Caco-2 (cell line): ENCODE measurements at regions of chr12 and their contacts with region 1.

Region 1: DNA sequence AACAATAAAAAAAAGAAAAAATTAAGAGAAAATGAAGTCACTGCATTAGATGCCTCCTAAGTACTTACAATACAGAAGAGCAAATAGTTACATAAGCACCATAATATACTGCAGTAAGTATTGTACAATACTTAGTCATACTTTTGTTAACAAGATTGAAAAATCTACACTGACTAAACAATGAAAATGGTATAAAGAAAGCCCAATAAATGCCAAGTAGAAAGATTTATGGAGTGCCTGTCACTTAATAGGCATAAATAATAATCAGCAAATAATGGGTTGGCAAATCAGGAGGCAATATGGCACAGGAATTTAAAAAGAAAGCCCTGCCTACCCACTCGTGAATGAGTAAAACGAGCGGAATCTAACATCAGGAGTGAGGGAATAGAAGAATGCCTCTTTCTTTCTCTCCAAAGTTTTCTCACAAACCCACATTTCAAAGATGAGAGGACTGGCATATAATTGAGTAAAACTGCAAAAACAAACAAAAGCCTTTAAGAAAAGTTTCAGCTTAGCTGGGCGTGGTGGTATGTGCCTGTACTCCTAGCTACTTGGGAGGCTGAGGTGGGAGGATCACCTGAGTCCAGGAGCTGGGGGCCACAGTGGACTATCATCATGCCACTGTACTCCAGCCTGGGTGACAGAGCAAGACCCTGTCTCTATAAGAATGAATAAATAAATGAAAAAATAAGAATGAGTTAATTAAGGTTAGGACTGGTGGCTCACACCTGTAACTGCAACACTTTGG is 36.1 kb downstream of the CRY1 start:
- DNase-seq: peak in 1 of 2 experiments; percentile 5
- H3K4me3 ChIP-seq: no peak overlapping the region
- H3K4me3 Mint-ChIP-seq: no peak overlapping the region
- H3K27ac Mint-ChIP-seq: no peak overlapping the region
- H3K4me1 ChIP-seq: no peaks in the 10 kb centered on the region
- H3K4me1 Mint-ChIP-seq: peaks cover 16% of the 10 kb centered on the region
- H3K27me3 ChIP-seq: no peaks in the 10 kb centered on the region
- H3K27me3 Mint-ChIP-seq: no peaks in the 10 kb centered on the region
- CTCF ChIP-seq: no peak

Region 2: GRCh38 chr12:107079172-107080011 is 22.1 kb after region 1 on chr12:
- CTCF ChIA-PET with region 1: no interaction called
- POLR2A ChIA-PET with region 1: interaction called, 14 read pairs
- intact Hi-C with region 1: no loop called
- DNase-seq: peak in 1 of 2 experiments; percentile 8
- H3K4me3 ChIP-seq: no peak overlapping the region
- H3K4me3 Mint-ChIP-seq: no peak overlapping the region
- H3K27ac Mint-ChIP-seq: no peak overlapping the region
- H3K4me1 ChIP-seq: 0 out of 2 replicates have a peak, but pooled peaks cover 6% of the 10 kb centered on the region
- H3K4me1 Mint-ChIP-seq: peaks cover 6% of the 10 kb centered on the region
- H3K27me3 ChIP-seq: no peaks in the 10 kb centered on the region
- H3K27me3 Mint-ChIP-seq: no peaks in the 10 kb centered on the region
- CTCF ChIP-seq: peak; percentile 35 to 50

Region 3: GRCh38 chr12:107122452-107122958 is 65.3 kb after region 1 on chr12:
- CTCF ChIA-PET with region 1: no interaction called
- POLR2A ChIA-PET with region 1: no interaction called
- intact Hi-C with region 1: no loop called
- DNase-seq: no peak
- H3K4me3 ChIP-seq: no peak overlapping the region
- H3K4me3 Mint-ChIP-seq: no peak overlapping the region
- H3K27ac Mint-ChIP-seq: no peak overlapping the region
- H3K4me1 ChIP-seq: no peaks in the 10 kb centered on the region
- H3K4me1 Mint-ChIP-seq: peaks cover 9% of the 10 kb centered on the region
- H3K27me3 ChIP-seq: no peaks in the 10 kb centered on the region; the same call in 1 of the 2 replicates
- H3K27me3 Mint-ChIP-seq: peaks cover 25% of the 10 kb centered on the region
- CTCF ChIP-seq: no peak